ENCODE measurements at regions of chr20 and their contacts with region 1.

Region 1: DNA sequence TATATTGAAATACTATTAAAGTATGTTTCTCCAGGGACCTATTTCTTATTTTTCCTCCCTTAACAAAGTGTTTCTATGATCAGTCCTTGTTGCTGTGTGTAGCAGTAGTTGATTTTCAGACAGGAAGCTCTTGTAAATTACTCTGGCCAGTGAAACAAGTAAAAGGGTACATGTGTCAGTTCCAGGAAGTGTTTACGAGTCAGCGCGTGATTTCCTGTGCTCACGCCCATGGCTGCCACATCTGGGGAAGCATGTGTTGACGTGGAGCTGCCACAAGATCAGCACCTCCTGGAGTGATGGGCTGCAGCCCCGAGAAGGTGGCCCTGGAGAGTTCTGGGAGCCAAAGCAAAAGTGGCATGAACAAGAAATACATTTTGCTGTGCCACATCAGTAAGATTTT is 38.6 kb upstream of the GGTLC1 start:
- DNase-seq: peak; percentile 89
- H3K4me3 Mint-ChIP-seq: peak overlapping the region; percentile 52
- H3K27ac Mint-ChIP-seq: peak overlapping the region; percentile 91
- H3K4me1 Mint-ChIP-seq: peaks cover 41% of the 10 kb centered on the region
- H3K27me3 Mint-ChIP-seq: no peaks in the 10 kb centered on the region

Region 2: DNA sequence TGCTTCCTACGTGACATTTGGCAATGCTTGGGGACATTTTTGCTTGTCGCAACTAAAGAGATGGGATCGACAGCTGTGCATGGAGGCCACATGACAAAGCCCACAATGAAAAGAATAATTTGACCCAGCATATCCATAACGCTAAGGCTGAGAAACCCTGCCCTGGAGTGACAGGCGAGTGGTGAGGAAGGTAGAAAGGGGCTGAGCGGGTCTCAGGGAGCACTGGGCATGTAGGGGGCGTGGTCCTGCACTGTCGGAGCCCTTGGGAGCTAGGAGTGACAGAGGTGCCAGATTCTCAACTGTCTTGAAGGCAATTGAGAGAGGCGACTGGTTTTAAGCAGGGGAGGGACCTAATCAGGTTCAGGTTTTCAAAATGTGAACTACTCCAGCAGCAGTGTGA is 52.3 kb before region 1 on chr20:
- CTCF ChIA-PET with region 1: no interaction called
- POLR2A ChIA-PET with region 1: no interaction called
- DNase-seq: no peak
- H3K4me3 Mint-ChIP-seq: no peak overlapping the region
- H3K27ac Mint-ChIP-seq: no peak overlapping the region
- H3K4me1 Mint-ChIP-seq: no peaks in the 10 kb centered on the region
- H3K27me3 Mint-ChIP-seq: peaks cover 4% of the 10 kb centered on the region

Region 3: DNA sequence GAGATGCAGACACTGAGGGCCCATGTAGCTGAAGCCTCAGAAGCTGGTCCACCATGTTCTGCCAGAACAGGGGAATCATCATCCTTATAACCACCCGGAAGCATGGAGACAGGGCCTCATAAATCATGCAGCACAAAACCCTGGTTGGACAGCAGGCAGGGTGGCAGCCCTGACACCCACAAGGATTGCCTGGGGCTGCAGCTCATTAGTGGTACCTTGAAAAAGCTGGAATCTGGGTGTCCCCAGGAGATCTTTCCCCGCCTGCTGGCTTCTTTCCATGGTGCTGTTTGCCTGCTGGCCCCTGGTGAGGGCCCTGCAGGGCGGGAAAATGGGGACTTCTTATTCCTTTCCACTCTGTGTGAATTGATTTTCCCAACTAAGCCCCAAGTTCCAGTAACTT is 12.0 kb after region 1 on chr20:
- CTCF ChIA-PET with region 1: interaction called, 8 read pairs
- POLR2A ChIA-PET with region 1: interaction called, 15 read pairs
- DNase-seq: no peak
- H3K4me3 Mint-ChIP-seq: no peak overlapping the region
- H3K27ac Mint-ChIP-seq: no peak overlapping the region
- H3K4me1 Mint-ChIP-seq: peaks cover 20% of the 10 kb centered on the region
- H3K27me3 Mint-ChIP-seq: no peaks in the 10 kb centered on the region

Region 4: GRCh38 chr20:24045621-24046318 is 18.5 kb after region 1 on chr20:
- CTCF ChIA-PET with region 1: interaction called, 7 read pairs
- POLR2A ChIA-PET with region 1: interaction called, 23 read pairs
- DNase-seq: peak; percentile 58
- H3K4me3 Mint-ChIP-seq: peak overlapping the region; percentile 20
- H3K27ac Mint-ChIP-seq: peak overlapping the region; percentile 74
- H3K4me1 Mint-ChIP-seq: peaks cover 52% of the 10 kb centered on the region
- H3K27me3 Mint-ChIP-seq: no peaks in the 10 kb centered on the region

Region 5: DNA sequence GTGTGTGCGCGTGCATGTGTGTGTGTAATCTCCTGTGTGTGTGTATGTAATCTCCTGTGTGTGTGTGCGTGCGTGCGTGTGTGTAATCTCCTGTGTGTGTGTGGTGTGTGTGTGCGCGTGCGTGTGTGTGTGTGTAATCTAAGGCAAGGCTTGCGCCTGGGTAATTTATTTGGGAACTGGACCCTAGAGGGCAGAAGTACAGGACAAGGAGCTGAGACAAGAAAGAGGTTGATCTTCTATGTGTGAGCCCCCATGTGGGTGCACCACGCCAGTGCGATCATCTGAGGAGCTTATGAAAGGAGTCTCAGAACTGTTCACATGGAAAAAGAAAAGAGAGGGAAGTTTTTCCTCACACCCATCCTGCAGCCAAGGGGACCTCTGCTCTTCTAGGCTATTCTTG is 181.4 kb after region 1 on chr20:
- CTCF ChIA-PET with region 1: no interaction called
- POLR2A ChIA-PET with region 1: no interaction called
- DNase-seq: no peak
- H3K4me3 Mint-ChIP-seq: no peak overlapping the region
- H3K27ac Mint-ChIP-seq: no peak overlapping the region
- H3K4me1 Mint-ChIP-seq: no peaks in the 10 kb centered on the region
- H3K27me3 Mint-ChIP-seq: peaks cover 24% of the 10 kb centered on the region

Measured in activated CD4-positive, alpha-beta memory T cell treated with anti-CD3 and anti-CD28 coated beads, Interleukin-2, amount 10 ng/mL, durations not matched to agents 7 days and 5 days (primary cell).